Right ventricle myocardium inferior (tissue), 1 donor: ENCODE measurements at regions of chr10 and their contacts with region 1.

Region 1: DNA sequence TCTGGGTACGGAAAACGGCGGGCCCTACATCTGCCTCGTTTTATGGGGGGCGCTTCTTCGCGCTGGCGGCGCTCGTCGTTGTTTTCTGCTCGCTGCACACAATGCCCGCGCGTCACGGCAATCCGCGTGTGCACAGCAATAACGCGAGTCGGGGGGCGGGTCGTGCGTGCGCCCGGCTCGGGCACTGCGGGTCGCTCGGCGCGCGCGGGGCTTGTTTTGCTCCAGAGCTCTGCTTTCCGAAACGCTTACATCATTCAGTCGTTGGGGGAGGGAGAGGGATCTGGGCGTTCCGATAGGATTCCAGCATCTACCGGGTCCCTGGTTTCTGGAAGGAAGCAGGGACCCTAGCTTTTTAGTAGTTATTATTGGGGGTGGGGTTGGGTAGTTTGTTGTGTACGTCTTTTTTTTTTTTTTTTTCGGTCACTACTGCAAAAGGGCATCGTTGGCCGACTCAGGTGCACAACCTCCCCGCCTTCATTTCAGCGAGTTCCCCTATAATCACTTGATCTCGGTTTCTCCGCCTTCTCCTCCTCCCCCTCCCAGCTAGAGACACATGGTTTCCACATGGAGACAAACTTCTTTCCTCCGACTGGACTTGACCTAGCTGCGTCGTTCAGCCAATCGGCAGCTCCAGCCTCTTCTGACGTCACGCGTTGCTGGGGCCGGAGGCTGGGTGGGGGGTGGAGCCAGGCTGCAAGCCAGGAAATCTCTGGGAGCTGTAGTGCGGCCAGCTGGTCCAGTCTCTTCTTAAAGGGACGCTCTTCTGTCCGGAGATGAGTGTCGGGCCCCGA is 3.5 kb downstream of the MXI1 start:
- DNase-seq: peak; percentile 97
- ATAC-seq: peak; percentile 88

Region 2: DNA sequence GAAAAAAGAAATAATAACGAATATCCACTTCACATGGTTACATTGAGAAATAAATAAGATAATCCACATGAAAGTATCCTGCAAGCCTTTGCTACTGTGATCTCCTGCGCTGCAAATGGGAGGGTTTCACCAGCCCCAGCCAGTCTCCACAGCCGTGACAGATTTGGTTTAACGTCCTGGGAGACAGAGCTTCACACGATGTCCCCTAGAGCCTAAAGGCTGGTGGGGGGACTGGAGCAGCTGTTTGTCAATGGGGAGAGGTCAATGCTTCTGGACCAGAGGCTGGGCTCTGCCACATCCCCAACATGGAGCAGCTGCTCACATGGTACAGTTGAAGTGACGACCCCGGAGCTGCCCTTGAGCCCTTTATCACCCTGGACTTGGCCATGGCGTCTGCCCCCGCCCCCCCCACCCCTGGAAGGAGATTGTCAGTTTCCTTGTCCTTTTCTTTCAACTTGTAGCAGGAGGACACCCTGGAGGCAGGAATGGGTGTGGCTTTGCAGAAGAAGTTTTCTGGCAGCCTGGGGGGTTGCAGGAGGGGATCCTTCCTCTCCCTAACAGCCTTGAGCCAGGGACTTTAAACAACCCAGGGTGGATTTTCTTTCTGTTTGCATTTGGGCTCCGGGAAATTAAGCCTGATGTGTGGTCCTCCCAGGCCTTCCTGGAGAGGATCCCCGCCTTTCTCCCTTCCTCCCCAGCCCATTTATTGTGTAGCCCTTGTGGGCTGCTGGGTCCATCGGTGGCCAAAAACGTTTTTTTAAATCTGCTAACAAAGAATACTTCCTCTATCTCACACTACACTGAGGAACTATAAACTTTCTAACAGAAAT is 40.5 kb before region 1 on chr10:
- intact Hi-C with region 1: loop called (anchors 2 kb)
- DNase-seq: no peak
- ATAC-seq: peak; percentile 22

Region 3: GRCh38 chr10:110269374-110270318 is 58.8 kb after region 1 on chr10:
- intact Hi-C with region 1: loop called (anchors 2 kb)
- DNase-seq: no peak
- ATAC-seq: peak; percentile 80

Region 4: DNA sequence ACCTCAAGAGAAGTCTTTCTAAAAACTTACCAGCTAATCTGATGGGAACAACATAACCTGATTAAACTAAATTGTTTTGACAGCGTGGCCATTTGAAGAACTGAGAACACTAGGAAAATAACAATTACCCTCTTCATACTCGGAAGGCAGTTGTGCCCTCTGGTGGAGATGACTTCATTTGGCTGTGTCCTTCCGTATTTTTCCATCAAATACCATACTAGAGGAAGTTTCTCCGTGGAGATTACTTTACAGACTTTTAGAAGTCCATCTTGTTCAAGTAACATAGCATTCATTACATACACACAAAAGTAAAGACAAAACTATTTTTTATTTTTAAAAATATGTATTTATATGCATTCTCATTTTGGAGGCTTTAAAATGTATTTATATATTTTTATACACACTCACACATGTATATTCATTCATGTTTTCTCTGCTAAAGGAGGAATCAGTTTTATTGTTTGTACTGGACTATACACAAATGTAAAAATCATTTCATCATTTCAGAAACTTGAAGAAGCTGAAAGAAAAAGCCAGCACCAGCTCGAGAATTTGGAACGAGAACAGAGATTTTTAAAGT is 68.6 kb after region 1 on chr10:
- intact Hi-C with region 1: loop called (anchors 2 kb)
- DNase-seq: no peak
- ATAC-seq: peak; percentile 76